ENCODE measurements at regions of chr1 and their contacts with region 1.

Region 1: GRCh38 chr1:162861101-162861500 is at the start of gene CCDC190:
- DNase-seq: no peak
- H3K4me3 ChIP-seq: no peak within 1 kb of the TSS
- H3K27ac ChIP-seq: no peak within 1 kb of the TSS
- H3K4me1 ChIP-seq: no peaks in the 10 kb centered on the region
- H3K27me3 ChIP-seq: no peaks in the 10 kb centered on the region
- CTCF ChIP-seq: no peak
- EP300 ChIP-seq: no peak
- POLR2A ChIP-seq: no peak
- RAD21 ChIP-seq: no peak
- total RNA-seq, gene CCDC190: not detected in 2 replicates

Region 2: GRCh38 chr1:162847839-162848453 is 13.2 kb before region 1 on chr1:
- CTCF ChIA-PET with region 1: interaction called, 26 read pairs
- POLR2A ChIA-PET with region 1: no interaction called
- DNase-seq: peak in 1 of 2 experiments; percentile 91
- H3K4me3 ChIP-seq: no peak overlapping the region
- H3K27ac ChIP-seq: no peak overlapping the region
- H3K4me1 ChIP-seq: no peaks in the 10 kb centered on the region
- H3K27me3 ChIP-seq: no peaks in the 10 kb centered on the region
- CTCF ChIP-seq: peak; percentile 62 to 80 (median 72)
- EP300 ChIP-seq: no peak
- POLR2A ChIP-seq: no peak
- RAD21 ChIP-seq: peak; percentile 82 to 86

Region 3: GRCh38 chr1:162930976-162931560 is 70.0 kb after region 1 on chr1:
- CTCF ChIA-PET with region 1: no interaction called
- POLR2A ChIA-PET with region 1: no interaction called
- DNase-seq: no peak
- H3K4me3 ChIP-seq: no peak overlapping the region
- H3K27ac ChIP-seq: no peak overlapping the region
- H3K4me1 ChIP-seq: no peaks in the 10 kb centered on the region; a peak in 1 of 7 replicates
- H3K27me3 ChIP-seq: no peaks in the 10 kb centered on the region
- CTCF ChIP-seq: no peak
- EP300 ChIP-seq: no peak
- POLR2A ChIP-seq: no peak
- RAD21 ChIP-seq: no peak

Measured in H1 (cell line).